ENCODE measurements at regions of chr14 and their contacts with region 1.

Region 1: DNA sequence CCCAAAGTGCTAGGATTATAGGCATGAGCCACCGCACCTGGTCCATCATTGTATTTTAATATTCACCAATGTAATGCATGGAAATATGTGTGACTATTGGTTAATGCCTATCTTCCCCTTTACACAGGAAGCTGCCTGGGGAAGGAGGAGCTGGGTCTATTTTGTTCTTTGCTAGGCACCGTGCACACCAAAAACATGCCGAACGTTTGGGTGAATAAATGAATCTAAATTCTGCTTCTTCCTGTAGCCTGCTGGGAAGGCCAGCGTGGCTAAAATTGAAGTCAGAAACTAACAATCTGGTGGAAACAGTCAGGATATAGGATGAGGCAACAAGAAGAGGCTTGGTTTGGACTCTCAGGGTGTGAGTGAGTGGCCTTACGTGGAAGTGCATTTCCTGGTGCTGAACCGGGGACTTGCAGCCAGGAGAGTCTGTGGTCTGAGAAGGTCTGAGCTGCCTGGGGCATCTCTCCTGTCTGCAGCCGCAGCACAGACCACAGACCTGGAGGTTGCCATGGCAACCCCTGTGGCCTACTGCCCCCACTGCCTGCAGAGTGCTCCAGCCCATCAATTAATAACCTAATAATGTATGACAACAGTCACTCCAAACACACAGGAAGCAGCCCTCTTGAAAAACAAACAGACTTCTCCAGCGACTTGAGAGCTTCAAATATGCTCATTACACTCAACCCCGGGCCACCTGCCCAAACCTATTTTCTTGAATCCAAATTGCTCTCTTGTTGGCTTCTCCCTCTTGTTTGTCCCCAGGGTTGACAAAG is 5.5 kb upstream of the GPR68 start:
- DNase-seq: peak; percentile 89
- H3K4me3 Mint-ChIP-seq: peak overlapping the region; percentile 74
- H3K27ac Mint-ChIP-seq: peak overlapping the region; percentile 95
- H3K4me1 Mint-ChIP-seq: peaks cover 68% of the 10 kb centered on the region
- H3K27me3 Mint-ChIP-seq: no peaks in the 10 kb centered on the region

Region 2: GRCh38 chr14:91193069-91193468 is 57.0 kb before region 1 on chr14:
- intact Hi-C with region 1: loop called (anchors 1 kb)
- DNase-seq: no peak
- H3K4me3 Mint-ChIP-seq: no peak overlapping the region
- H3K27ac Mint-ChIP-seq: no peak overlapping the region
- H3K4me1 Mint-ChIP-seq: peaks cover 39% of the 10 kb centered on the region
- H3K27me3 Mint-ChIP-seq: no peaks in the 10 kb centered on the region

Region 3: DNA sequence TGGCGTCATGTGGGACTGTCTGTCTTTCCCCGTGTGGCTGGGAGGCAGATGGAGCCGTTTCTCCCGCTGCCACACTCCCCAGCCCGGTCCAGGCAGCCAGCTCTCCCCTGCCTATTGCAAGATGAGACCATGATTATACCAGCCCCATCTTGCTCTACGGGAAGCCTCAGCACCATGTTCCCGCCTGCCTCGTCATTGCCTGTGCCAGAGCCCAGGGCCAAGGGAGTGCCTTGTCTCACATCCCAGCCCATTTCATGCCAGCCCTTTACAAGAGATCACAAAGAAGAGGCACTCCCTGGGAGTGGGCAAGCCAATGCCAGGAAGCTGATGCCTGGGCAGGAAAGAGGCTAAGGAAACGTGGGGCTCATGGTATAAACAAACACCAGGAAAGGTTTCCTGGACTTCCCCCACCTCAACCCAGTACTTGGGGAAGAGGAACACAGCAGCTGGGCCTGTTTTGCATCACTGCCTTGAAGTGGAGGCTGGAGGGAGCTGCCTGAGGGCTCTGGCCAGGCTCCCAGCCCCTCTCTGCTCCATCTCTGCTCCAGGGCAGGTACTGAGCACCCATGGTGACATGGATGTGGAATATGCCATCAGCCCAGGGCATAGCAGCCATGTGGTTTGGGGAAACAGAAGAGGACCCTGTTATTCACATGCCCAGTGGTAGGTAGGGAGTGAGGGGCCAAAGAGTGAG is 29.3 kb before region 1 on chr14:
- intact Hi-C with region 1: no loop called
- DNase-seq: no peak
- H3K4me3 Mint-ChIP-seq: no peak overlapping the region
- H3K27ac Mint-ChIP-seq: peak overlapping the region; percentile 6
- H3K4me1 Mint-ChIP-seq: peaks cover 56% of the 10 kb centered on the region
- H3K27me3 Mint-ChIP-seq: no peaks in the 10 kb centered on the region

Region 4: GRCh38 chr14:91261115-91261514 is 11.1 kb after region 1 on chr14:
- intact Hi-C with region 1: loop called (anchors 1 kb)
- DNase-seq: peak; percentile 87
- H3K4me3 Mint-ChIP-seq: no peak overlapping the region
- H3K27ac Mint-ChIP-seq: peak overlapping the region; percentile 85
- H3K4me1 Mint-ChIP-seq: peaks cover 60% of the 10 kb centered on the region
- H3K27me3 Mint-ChIP-seq: no peaks in the 10 kb centered on the region

Region 5: GRCh38 chr14:91272341-91273272 is 22.6 kb after region 1 on chr14:
- intact Hi-C with region 1: no loop called
- DNase-seq: no peak
- H3K4me3 Mint-ChIP-seq: no peak overlapping the region
- H3K27ac Mint-ChIP-seq: no peak overlapping the region
- H3K4me1 Mint-ChIP-seq: peaks cover 11% of the 10 kb centered on the region
- H3K27me3 Mint-ChIP-seq: no peaks in the 10 kb centered on the region

Region 6: DNA sequence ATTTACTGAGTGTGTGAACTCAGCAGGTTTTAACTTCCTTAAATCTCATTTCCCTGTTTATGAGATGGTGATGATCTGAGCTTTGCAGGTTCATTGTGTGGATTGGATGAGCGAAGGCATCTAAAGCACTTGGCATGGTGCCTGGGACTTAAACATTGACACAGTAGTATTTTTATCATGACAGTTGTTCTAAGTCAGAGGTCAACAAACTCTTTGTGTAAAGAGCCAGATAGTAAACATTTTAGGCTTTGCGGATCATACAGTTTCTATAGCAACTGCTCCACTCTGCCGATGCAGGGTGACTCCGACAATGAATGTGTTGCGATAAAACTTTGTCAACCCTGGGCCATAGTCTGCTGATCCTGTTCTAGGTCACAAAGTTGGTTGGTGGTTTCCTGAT is 1098.1 kb after region 1 on chr14:
- intact Hi-C with region 1: no loop called
- DNase-seq: no peak
- H3K4me3 Mint-ChIP-seq: no peak overlapping the region
- H3K27ac Mint-ChIP-seq: no peak overlapping the region
- H3K4me1 Mint-ChIP-seq: peaks cover 2% of the 10 kb centered on the region
- H3K27me3 Mint-ChIP-seq: peaks cover 43% of the 10 kb centered on the region

Measured in activated CD4-positive, alpha-beta T cell treated with anti-CD3 and anti-CD28 coated beads, Interleukin-2, amount 10 ng/mL, durations not matched to agents 24 days and 14 days (primary cell).